H1 (cell line): ENCODE measurements at regions of chr3 and their contacts with region 1.

Region 1: GRCh38 chr3:14377348-14378169 is 24.8 kb upstream of the SLC6A6 start:
- DNase-seq: no peak
- H3K4me3 ChIP-seq: no peak overlapping the region
- H3K27ac ChIP-seq: no peak overlapping the region
- H3K4me1 ChIP-seq: peaks cover 1 to 2% (median 2%) of the 10 kb centered on the region in 4 experiments; a peak in 4 of 7 replicates
- H3K27me3 ChIP-seq: no peaks in the 10 kb centered on the region
- CTCF ChIP-seq: no peak
- EP300 ChIP-seq: no peak
- POLR2A ChIP-seq: no peak
- RAD21 ChIP-seq: no peak

Region 2: GRCh38 chr3:14363991-14364390 is 13.6 kb before region 1 on chr3:
- CTCF ChIA-PET with region 1: interaction called, 24 read pairs
- POLR2A ChIA-PET with region 1: no interaction called
- DNase-seq: no peak
- H3K4me3 ChIP-seq: no peak overlapping the region
- H3K27ac ChIP-seq: no peak overlapping the region
- H3K4me1 ChIP-seq: peaks cover 0 to 10% (median 3%) of the 10 kb centered on the region in 4 experiments; a peak in 2 of 7 replicates
- H3K27me3 ChIP-seq: no peaks in the 10 kb centered on the region
- CTCF ChIP-seq: no peak
- EP300 ChIP-seq: no peak
- POLR2A ChIP-seq: no peak
- RAD21 ChIP-seq: no peak

Region 3: DNA sequence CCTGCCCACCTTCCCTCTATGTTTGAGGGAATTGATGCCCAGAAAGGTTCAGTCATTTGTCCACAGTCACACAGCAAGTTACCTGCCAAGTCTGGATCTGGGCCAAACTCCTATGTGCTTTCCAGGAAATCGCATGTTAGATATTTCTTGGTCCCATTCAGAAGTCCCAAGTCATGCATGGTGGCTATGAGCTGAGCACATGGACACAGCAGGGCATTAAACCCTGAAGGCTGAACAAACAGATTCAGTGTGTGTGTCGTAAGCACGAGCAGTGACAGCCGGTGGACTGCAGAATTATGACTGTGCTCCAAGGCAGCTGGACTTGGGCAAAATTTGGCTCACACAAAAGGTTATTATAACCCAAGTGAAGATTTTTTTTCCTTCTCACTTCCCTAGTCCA is 13.5 kb after region 1 on chr3:
- CTCF ChIA-PET with region 1: interaction called, 70 read pairs
- POLR2A ChIA-PET with region 1: interaction called, 7 read pairs
- DNase-seq: no peak
- H3K4me3 ChIP-seq: no peak overlapping the region
- H3K27ac ChIP-seq: no peak overlapping the region
- H3K4me1 ChIP-seq: peaks cover 0 to 5% (median 3%) of the 10 kb centered on the region in 4 experiments; a peak in 6 of 7 replicates
- H3K27me3 ChIP-seq: no peaks in the 10 kb centered on the region
- CTCF ChIP-seq: no peak
- EP300 ChIP-seq: no peak
- POLR2A ChIP-seq: no peak
- RAD21 ChIP-seq: no peak

Region 4: GRCh38 chr3:14577897-14578296 is 200.3 kb after region 1 on chr3:
- CTCF ChIA-PET with region 1: no interaction called
- POLR2A ChIA-PET with region 1: no interaction called
- DNase-seq: no peak
- H3K4me3 ChIP-seq: no peak overlapping the region
- H3K27ac ChIP-seq: no peak overlapping the region
- H3K4me1 ChIP-seq: peaks cover 0 to 5% (median 1%) of the 10 kb centered on the region in 4 experiments; a peak in 3 of 7 replicates
- H3K27me3 ChIP-seq: no peaks in the 10 kb centered on the region
- CTCF ChIP-seq: peak in 1 of 3 experiments; percentile 6; a peak in 2 of 4 replicates
- EP300 ChIP-seq: no peak
- POLR2A ChIP-seq: no peak
- RAD21 ChIP-seq: peak; percentile 32 to 34; a peak in 3 of 4 replicates